ENCODE measurements at regions of chr17 and their contacts with region 1.

Region 1: DNA sequence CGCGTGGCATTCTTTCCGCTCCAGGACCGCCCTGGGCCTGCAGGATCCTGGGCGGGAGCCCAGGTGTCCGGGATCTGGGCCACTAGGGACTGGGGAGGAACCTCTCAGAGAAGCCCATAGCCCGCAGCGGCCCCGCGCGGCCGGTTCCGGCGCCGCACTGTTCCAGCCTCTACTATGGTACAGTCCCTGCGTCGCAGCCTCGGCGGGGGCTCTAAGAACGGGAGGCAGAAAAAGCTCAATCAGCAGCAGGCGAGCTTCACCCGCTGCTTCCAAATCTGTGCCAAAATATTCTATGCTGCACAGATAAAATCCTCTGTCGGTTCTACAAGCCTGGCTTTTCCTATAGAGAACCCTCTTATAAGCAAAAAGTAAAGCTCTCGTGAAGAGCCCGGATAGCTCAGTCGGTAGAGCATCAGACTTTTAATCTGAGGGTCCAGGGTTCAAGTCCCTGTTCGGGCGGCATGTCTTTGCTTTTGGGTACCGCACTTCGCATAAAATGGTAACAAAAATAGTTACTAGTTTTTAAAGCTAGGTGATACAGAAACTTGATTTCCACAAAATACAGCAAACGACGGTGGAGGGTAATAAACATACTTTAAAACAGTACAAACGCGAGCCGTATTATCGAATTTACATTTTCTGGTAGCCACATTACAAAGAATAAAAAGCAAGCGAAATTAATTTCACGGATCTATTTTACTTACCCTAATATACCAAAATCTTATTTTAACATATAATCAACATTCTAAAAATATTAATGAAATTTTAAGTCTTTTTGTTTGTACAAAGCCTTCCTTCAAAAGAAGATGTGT is 661 bp upstream of the ALOXE3 start:
- DNase-seq: peak; percentile 94
- ATAC-seq: peak; percentile 58
- H3K4me3 Mint-ChIP-seq: peak overlapping the region; percentile 90
- H3K27ac Mint-ChIP-seq: peak overlapping the region; percentile 94
- H3K4me1 Mint-ChIP-seq: peaks cover 46% of the 10 kb centered on the region
- H3K27me3 Mint-ChIP-seq: peaks cover 29% of the 10 kb centered on the region

Region 2: GRCh38 chr17:7644775-7645174 is 474.2 kb before region 1 on chr17:
- CTCF ChIA-PET with region 1: no interaction called
- POLR2A ChIA-PET with region 1: no interaction called
- intact Hi-C with region 1: no loop called
- DNase-seq: peak; percentile 18
- ATAC-seq: peak; percentile 79
- H3K4me3 Mint-ChIP-seq: no peak overlapping the region
- H3K27ac Mint-ChIP-seq: no peak overlapping the region
- H3K4me1 Mint-ChIP-seq: peaks cover 10% of the 10 kb centered on the region
- H3K27me3 Mint-ChIP-seq: peaks cover 12% of the 10 kb centered on the region

Region 3: GRCh38 chr17:7844292-7845154 is 274.5 kb before region 1 on chr17:
- CTCF ChIA-PET with region 1: interaction called, 3 read pairs
- POLR2A ChIA-PET with region 1: no interaction called
- intact Hi-C with region 1: loop called in 1 of 2 experiments (anchors 1 kb)
- DNase-seq: peak; percentile 92
- ATAC-seq: peak; percentile 51
- H3K4me3 Mint-ChIP-seq: peak overlapping the region; percentile 97
- H3K27ac Mint-ChIP-seq: peak overlapping the region; percentile 96
- H3K4me1 Mint-ChIP-seq: peaks cover 40% of the 10 kb centered on the region
- H3K27me3 Mint-ChIP-seq: no peaks in the 10 kb centered on the region

Region 4: GRCh38 chr17:8079291-8080207 is 39.4 kb before region 1 on chr17:
- CTCF ChIA-PET with region 1: interaction called, 42 read pairs
- POLR2A ChIA-PET with region 1: no interaction called
- intact Hi-C with region 1: loop called (anchors 1 kb)
- DNase-seq: peak; percentile 92
- ATAC-seq: peak; percentile 94
- H3K4me3 Mint-ChIP-seq: peak overlapping the region; percentile 94
- H3K27ac Mint-ChIP-seq: peak overlapping the region; percentile 92
- H3K4me1 Mint-ChIP-seq: peaks cover 12% of the 10 kb centered on the region
- H3K27me3 Mint-ChIP-seq: peaks cover 5% of the 10 kb centered on the region

Region 5: DNA sequence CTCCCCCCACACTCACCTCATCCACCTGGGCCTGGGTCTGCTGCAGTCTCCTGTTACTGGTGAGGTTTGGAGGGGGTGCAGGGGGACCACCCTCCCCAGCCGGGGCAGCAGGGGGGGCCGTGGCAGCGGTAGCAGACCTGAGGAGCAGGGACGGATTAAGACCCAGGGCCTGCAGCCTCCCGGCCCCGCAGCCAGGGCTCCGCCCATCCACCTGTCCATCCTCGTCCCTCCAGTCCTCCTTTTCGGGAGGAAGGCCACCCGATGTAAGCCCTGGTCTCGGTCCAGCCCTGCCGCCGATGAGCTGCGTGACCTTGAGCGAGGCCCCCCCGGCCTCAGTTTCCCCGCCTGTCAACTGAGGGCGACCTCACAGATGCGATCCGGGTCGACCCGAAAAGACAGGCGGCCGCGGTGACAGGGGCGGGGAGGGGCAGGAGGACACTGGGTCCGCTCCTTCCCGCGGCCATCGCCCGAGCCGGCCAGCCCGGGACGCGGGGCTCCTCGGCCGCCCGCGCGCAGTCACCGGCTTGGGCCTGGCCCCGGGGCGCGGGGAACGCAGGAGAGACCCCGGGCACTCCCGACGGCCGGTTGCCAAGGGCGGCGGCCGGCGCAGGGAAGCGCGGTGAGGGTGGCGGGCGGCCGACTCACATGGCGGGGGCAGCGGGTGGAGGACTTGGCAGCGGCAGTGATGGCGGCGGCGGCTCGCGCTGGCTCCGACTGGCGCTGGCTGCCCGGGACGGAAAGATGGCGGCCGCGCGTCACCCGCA is 43.4 kb after region 1 on chr17 and contains the start of gene VAMP2:
- CTCF ChIA-PET with region 1: interaction called, 88 read pairs
- POLR2A ChIA-PET with region 1: no interaction called
- intact Hi-C with region 1: loop called in 1 of 2 experiments (anchors 1 kb)
- DNase-seq: peak; percentile 92
- ATAC-seq: peak; percentile 47
- H3K4me3 Mint-ChIP-seq: peak within 1 kb of the TSS; percentile 85
- H3K27ac Mint-ChIP-seq: peak within 1 kb of the TSS; percentile 96
- H3K4me1 Mint-ChIP-seq: peaks cover 57% of the 10 kb centered on the region
- H3K27me3 Mint-ChIP-seq: no peaks in the 10 kb centered on the region
- total RNA-seq, gene VAMP2: 26.7 to 27.8 TPM

Region 6: DNA sequence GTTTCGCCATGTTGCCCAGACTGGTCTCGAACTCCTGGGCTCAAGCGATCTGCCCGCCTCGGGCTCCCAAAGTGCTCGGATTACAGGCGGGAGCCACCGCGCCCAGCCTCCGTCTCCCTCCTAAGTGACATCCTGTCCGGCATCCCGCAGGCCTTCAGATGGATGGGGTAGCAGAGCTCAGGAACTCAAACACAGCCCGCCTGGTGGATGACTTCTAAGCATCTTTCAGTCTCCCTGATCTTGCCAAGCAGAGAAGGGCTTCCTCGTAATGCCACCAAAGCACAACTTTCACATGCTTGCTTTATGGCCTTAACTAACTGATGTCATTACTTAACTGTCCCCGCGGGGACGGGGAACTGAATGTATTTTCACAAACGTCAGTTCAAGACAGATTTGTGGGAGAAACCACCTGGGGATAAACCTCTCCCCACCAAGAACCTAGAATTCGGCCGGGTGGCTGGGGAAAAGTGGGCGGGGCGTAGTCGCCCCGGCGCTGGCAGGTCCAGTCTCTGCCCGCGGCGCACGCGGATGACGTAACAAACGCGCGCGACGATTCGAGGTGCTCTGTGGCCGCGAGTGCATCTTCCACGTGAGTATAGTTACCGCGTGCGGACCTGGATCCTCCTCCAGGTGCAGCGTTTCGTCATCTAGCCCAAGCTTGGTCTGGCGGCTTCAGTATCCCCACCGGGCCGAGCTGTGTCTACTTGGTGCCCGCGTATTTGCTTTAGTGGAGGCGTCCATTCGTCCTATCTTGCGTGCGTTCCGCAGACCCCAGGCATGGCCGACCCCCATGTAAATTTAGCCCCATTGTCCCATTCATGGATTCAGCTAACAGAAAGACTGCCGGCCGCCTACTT is 130.0 kb after region 1 on chr17 and contains the start of gene PFAS:
- CTCF ChIA-PET with region 1: interaction called, 14 read pairs
- POLR2A ChIA-PET with region 1: interaction called, 12 read pairs
- intact Hi-C with region 1: loop called (anchors 1 to 2 kb)
- DNase-seq: peak; percentile 98
- ATAC-seq: peak; percentile 57
- H3K4me3 Mint-ChIP-seq: peak within 1 kb of the TSS; percentile 94
- H3K27ac Mint-ChIP-seq: peak within 1 kb of the TSS; percentile 98
- H3K4me1 Mint-ChIP-seq: peaks cover 36% of the 10 kb centered on the region
- H3K27me3 Mint-ChIP-seq: no peaks in the 10 kb centered on the region
- total RNA-seq, gene PFAS: 113 to 141 TPM

Region 7: GRCh38 chr17:8383143-8383822 is 264.3 kb after region 1 on chr17 and contains the start of gene RPL26:
- CTCF ChIA-PET with region 1: no interaction called
- POLR2A ChIA-PET with region 1: no interaction called
- intact Hi-C with region 1: loop called in 1 of 2 experiments (anchors 1 kb)
- DNase-seq: peak; percentile 96
- ATAC-seq: peak; percentile 92
- H3K4me3 Mint-ChIP-seq: peak within 1 kb of the TSS; percentile 100
- H3K27ac Mint-ChIP-seq: peak within 1 kb of the TSS; percentile 99
- H3K4me1 Mint-ChIP-seq: peaks cover 50% of the 10 kb centered on the region
- H3K27me3 Mint-ChIP-seq: no peaks in the 10 kb centered on the region
- total RNA-seq, gene RPL26: 3,064 to 3,721 TPM

Measured in activated CD4-positive, alpha-beta T cell treated with anti-CD3 and anti-CD28 coated beads for 36 hours (primary cell).